Activated CD4-positive, alpha-beta T cell treated with anti-CD3 and anti-CD28 coated beads, Interleukin-2, amount 10 ng/mL, durations not matched to agents 7 days and 5 days (primary cell): ENCODE measurements at regions of chr17 and their contacts with region 1.

Region 1: GRCh38 chr17:40355123-40355803 is 9.3 kb downstream of the GJD3 start:
- DNase-seq: peak; percentile 72
- H3K4me3 Mint-ChIP-seq: no peak overlapping the region
- H3K27ac Mint-ChIP-seq: no peak overlapping the region
- H3K4me1 Mint-ChIP-seq: peaks cover 31% of the 10 kb centered on the region
- H3K27me3 Mint-ChIP-seq: peaks cover 4% of the 10 kb centered on the region

Region 2: GRCh38 chr17:40303009-40303657 is 52.1 kb before region 1 on chr17:
- CTCF ChIA-PET with region 1: interaction called, 82 read pairs
- POLR2A ChIA-PET with region 1: interaction called, 5 read pairs
- DNase-seq: peak; percentile 65
- H3K4me3 Mint-ChIP-seq: no peak overlapping the region
- H3K27ac Mint-ChIP-seq: no peak overlapping the region
- H3K4me1 Mint-ChIP-seq: peaks cover 22% of the 10 kb centered on the region
- H3K27me3 Mint-ChIP-seq: no peaks in the 10 kb centered on the region

Region 3: DNA sequence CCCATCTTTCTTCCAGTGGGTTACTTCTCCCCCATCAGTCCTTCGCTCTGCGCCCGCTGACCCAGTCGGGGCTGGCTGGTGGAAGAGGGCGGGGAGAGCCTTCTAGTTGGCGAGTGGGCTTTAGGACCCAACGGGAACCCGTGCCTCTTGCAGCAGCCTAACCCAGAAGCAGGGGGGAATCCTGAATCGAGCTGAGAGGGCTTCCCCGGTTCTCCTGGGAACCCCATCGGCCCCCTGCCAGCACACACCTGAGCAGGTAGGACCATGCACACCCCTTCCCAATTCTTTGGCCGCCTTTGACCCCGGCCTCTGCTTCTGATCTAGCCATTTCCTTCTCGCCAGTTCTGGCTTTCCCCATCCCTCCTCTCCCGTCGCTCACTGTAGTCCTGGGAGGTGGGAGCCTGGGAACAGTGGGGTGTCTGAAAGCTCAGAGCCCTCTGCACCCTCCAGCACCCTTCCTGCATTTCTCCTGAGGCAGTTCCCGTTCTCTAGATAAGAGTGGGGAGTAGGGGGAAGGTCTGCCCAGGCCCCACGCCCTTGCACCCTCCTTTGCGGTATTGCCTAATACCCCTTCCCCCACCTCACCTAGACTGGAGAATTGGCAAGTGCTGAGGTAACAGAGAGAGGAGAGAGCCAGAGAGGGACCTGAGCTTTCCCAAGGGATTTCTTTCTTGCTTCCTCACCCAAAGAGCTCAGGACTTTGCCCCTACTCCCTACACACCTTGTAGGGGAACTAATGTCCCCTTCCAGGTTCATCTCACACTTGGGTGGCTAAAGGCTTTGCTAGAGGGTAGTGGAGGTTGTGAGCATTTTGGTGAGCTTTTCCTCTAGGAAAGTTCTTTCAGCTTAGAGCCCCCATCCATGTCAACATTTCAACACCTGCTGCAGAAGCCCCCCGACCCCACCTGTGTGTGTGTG is 46.0 kb before region 1 on chr17 and contains the start of gene RARA:
- CTCF ChIA-PET with region 1: interaction called, 82 read pairs
- POLR2A ChIA-PET with region 1: no interaction called
- DNase-seq: no peak
- H3K4me3 Mint-ChIP-seq: no peak within 1 kb of the TSS
- H3K27ac Mint-ChIP-seq: peak within 1 kb of the TSS; percentile 72
- H3K4me1 Mint-ChIP-seq: peaks cover 31% of the 10 kb centered on the region
- H3K27me3 Mint-ChIP-seq: no peaks in the 10 kb centered on the region
- total RNA-seq, gene RARA: 66.6 to 66.7 TPM

Region 4: GRCh38 chr17:40317880-40318829 is 37.1 kb before region 1 on chr17:
- CTCF ChIA-PET with region 1: interaction called, 22 read pairs
- POLR2A ChIA-PET with region 1: no interaction called
- DNase-seq: peak; percentile 93
- H3K4me3 Mint-ChIP-seq: peak overlapping the region; percentile 99
- H3K27ac Mint-ChIP-seq: peak overlapping the region; percentile 96
- H3K4me1 Mint-ChIP-seq: peaks cover 64% of the 10 kb centered on the region
- H3K27me3 Mint-ChIP-seq: no peaks in the 10 kb centered on the region

Region 5: DNA sequence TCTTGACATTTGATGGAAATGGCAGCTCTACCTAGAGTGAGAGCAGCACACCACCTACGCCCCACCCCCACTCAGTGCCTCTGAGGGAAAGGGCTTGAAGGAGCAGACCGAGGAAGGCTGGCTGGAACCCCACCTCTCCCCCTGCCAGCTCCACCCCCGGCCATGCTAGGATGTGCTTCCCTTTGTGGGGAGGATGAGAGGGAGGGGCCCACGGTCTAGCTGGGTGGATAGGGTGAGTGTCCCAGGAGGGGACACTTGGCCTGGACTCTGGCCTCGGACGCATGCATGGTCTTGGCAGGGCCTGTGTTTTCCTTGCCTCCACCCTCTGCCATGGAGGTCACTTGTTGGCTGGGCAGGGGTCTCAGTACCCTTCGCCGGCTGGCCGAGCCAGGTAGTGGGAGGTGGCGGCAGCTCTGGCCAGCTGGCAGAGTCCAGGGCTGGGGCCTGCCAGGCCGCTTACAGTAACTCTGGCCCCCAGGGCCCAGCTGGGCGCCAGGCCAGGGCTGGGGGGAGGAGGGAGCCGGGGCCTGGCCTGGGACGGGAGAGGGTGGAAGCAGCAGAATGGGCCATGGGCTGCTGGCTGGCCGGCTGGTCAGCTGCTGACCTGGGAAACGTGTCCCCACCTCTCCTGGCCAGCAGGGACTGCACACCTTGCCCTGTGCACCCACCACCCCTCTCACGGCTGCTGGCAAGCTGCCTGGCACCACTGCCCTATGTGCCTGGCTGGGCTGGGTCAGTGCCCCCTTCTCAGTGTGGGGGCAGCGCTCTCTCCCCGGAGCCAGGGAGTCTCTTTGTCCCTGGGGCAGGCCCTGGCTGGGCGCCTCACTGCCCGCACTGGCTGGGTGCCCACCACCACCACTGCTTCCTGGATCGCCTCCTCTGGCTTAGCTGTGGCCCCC is 23.3 kb before region 1 on chr17:
- CTCF ChIA-PET with region 1: interaction called, 37 read pairs
- POLR2A ChIA-PET with region 1: no interaction called
- DNase-seq: peak; percentile 42
- H3K4me3 Mint-ChIP-seq: peak overlapping the region; percentile 45
- H3K27ac Mint-ChIP-seq: peak overlapping the region; percentile 71
- H3K4me1 Mint-ChIP-seq: peaks cover 86% of the 10 kb centered on the region
- H3K27me3 Mint-ChIP-seq: no peaks in the 10 kb centered on the region

Region 6: GRCh38 chr17:40340880-40341807 is 14.1 kb before region 1 on chr17:
- CTCF ChIA-PET with region 1: interaction called, 23 read pairs
- POLR2A ChIA-PET with region 1: no interaction called
- DNase-seq: peak; percentile 89
- H3K4me3 Mint-ChIP-seq: peak overlapping the region; percentile 69
- H3K27ac Mint-ChIP-seq: peak overlapping the region; percentile 94
- H3K4me1 Mint-ChIP-seq: peaks cover 83% of the 10 kb centered on the region
- H3K27me3 Mint-ChIP-seq: no peaks in the 10 kb centered on the region